Dorsolateral prefrontal cortex (tissue), 120 donors: ENCODE measurements at regions of chr20 and their contacts with region 1.

Region 1: GRCh38 chr20:20712474-20713243 is at the start of gene RALGAPA2:
- DNase-seq: peak; percentile 96 to 99 (median 98)
- H3K4me3 ChIP-seq: peak within 1 kb of the TSS; percentile 65 to 99 (median 89)
- H3K27ac ChIP-seq: peak within 1 kb of the TSS; percentile 66 to 98 (median 95)
- H3K27me3 ChIP-seq: no peaks in the 10 kb centered on the region
- CTCF ChIP-seq: peak; percentile 18 to 74 (median 54)
- total RNA-seq, gene RALGAPA2: 20.3 to 60.5 (median 34.7) TPM

Region 2: GRCh38 chr20:20076297-20077065 is 636.2 kb before region 1 on chr20:
- intact Hi-C with region 1: no loop called
- DNase-seq: peak in 9 of 10 donors; percentile 74 to 95 (median 92)
- H3K4me3 ChIP-seq: no peak overlapping the region
- H3K27ac ChIP-seq: peak overlapping the region in 4 of 59 donors; percentile 6 to 56 (median 32)
- H3K27me3 ChIP-seq: no peaks in the 10 kb centered on the region
- CTCF ChIP-seq: peak in 6 of 56 donors; percentile 11 to 38 (median 27)

Region 3: GRCh38 chr20:20664795-20665589 is 47.7 kb before region 1 on chr20:
- intact Hi-C with region 1: loop called in 1 of 2 experiments (anchors 5 kb)
- DNase-seq: no peak
- H3K4me3 ChIP-seq: no peak overlapping the region
- H3K27ac ChIP-seq: no peak overlapping the region
- H3K27me3 ChIP-seq: no peaks in the 10 kb centered on the region
- CTCF ChIP-seq: peak in 55 of 56 donors; percentile 20 to 78 (median 59)

Region 4: DNA sequence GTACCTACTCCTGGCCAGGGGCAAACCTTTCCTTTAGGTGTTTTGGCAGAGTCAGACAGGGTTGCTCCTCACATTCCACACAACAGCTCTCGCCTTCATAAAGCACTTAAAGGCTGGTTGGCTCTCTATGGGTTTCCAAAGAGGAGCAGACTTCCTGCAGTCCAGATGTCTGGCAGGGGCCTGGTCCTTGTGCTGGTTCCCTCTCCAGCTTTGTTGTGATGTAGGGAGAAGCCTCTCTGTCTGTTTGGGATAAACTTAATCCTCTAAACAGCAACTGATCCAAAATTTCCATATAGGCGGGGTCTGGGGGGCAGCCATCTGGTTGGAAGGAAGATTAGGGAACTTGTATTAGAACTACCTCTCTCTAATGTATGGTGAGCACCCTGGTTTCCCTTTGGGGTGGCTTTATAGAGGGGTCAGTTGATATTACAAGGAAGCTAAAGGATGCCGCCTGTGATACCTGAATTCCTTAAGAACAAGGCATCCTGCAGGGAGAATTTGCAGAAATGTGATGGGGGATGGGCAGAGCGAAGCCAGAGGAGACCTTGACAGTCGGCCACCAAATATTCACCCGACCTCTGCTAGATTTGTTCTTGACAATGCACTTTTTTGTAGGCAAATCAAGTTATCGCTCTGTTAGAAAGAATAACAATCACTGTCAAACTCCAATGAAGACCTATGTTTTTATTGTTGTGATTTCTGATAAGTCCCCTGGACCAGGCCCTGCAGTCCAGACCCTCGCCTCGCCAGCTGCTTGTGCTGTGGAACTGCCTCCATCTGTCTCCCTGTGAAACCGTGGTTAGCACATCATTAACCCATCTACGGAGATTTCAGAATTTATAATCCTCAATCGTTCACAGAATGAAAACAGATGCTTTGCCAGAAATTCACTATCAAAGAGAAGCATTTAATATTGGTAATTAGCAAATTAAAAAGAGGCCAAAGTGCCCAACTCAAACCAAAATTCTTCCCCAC is 93.7 kb after region 1 on chr20:
- intact Hi-C with region 1: loop called in 1 of 2 experiments (anchors 5 kb)
- DNase-seq: no peak
- H3K4me3 ChIP-seq: no peak overlapping the region
- H3K27ac ChIP-seq: no peak overlapping the region
- H3K27me3 ChIP-seq: peaks cover 0 to 8% (median 0%) of the 10 kb centered on the region in 45 donors
- CTCF ChIP-seq: no peak

Region 5: DNA sequence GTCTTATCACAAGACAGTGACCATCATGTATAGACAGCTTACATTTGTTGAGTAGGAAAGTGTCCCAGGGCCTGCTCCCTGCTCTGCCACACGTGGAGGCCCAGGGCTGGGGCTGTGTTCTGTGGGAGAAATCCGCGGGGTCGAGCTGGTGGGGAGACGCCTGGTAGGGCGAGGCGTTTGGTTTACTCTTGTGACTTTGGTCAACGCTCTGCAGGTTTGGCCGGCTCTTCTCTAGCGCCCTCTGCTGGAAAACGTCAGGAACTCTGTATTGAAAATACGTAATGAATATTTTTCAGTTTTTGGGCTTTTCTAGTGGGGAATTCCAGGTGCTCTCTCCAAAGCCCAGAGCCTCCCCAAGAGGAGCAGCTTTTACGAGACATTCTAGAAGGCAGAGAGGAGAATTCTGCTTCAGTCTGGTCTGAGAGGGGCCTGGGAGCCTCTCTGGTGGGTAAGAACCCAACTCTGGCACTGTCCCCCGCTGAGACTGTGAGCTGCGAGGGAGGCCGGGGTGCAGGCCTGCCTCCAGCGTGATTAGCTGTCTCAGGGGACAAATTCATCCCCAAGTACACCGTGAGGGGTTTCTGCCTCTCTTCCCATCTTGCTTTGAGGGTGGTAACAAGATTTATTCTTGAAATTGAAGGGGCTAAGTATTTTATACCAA is 112.4 kb after region 1 on chr20:
- intact Hi-C with region 1: loop called in 1 of 2 experiments (anchors 2 kb)
- DNase-seq: peak in 4 of 10 donors; percentile 36 to 64 (median 43)
- H3K4me3 ChIP-seq: peak overlapping the region in 2 of 59 donors; percentile 14 to 30
- H3K27ac ChIP-seq: no peak overlapping the region
- H3K27me3 ChIP-seq: peaks cover 0 to 11% (median 0%) of the 10 kb centered on the region in 45 donors
- CTCF ChIP-seq: peak; percentile 71 to 93 (median 84)

Region 6: GRCh38 chr20:20864351-20865096 is 151.9 kb after region 1 on chr20:
- intact Hi-C with region 1: no loop called
- DNase-seq: no peak
- H3K4me3 ChIP-seq: no peak overlapping the region
- H3K27ac ChIP-seq: no peak overlapping the region
- H3K27me3 ChIP-seq: peaks cover 0 to 8% (median 0%) of the 10 kb centered on the region in 45 donors
- CTCF ChIP-seq: peak in 53 of 56 donors; percentile 24 to 70 (median 46)